PC-9 (cell line): ENCODE measurements at regions of chr9 and their contacts with region 1.

Region 1: DNA sequence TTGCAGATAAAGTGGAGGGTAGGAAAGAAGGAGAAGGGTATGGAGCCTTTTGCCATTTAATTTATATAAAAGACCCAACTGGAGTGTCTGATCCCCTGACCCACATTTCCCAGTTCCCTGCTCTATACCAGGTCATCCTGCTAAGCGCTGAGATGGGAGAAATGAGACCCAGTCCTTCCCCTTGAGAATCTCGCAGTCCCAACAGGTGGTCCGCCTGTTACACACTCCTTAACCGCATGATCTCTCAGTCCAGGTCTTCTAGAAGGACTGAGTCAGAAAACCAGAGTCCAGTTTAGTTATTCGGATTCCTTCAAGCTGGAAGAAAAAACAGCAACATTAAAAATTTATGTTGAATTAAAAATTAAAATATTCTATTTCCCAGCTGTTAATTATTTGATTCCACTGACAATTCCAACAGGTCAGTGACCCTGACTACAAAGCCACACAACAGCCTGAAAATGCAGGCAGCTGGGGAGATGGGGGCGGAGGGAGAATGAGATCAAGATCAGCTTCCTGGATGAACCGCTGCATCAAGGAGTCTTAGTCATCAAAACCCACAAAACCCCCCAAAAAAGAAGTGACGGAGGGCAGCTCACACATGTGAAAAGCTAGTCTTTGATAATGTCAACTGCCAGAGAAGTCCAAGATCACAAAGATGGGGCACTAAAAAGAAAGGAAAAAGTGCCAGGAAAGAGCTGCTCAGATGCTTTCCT is 44.0 kb downstream of the GGTA1 start:
- DNase-seq: no peak
- H3K4me3 ChIP-seq: no peak overlapping the region
- H3K27ac ChIP-seq: no peak overlapping the region
- H3K4me1 ChIP-seq: no peaks in the 10 kb centered on the region
- H3K27me3 ChIP-seq: peaks cover 73% of the 10 kb centered on the region
- CTCF ChIP-seq: no peak

Region 2: GRCh38 chr9:121169094-121169601 is 286.5 kb before region 1 on chr9:
- CTCF ChIA-PET with region 1: no interaction called
- POLR2A ChIA-PET with region 1: interaction called, 10 read pairs
- intact Hi-C with region 1: no loop called
- DNase-seq: no peak
- H3K4me3 ChIP-seq: no peak overlapping the region
- H3K27ac ChIP-seq: no peak overlapping the region
- H3K4me1 ChIP-seq: no peaks in the 10 kb centered on the region
- H3K27me3 ChIP-seq: no peaks in the 10 kb centered on the region
- CTCF ChIP-seq: peak; percentile 57